ENCODE measurements at regions of chr2 and their contacts with region 1.

Region 1: DNA sequence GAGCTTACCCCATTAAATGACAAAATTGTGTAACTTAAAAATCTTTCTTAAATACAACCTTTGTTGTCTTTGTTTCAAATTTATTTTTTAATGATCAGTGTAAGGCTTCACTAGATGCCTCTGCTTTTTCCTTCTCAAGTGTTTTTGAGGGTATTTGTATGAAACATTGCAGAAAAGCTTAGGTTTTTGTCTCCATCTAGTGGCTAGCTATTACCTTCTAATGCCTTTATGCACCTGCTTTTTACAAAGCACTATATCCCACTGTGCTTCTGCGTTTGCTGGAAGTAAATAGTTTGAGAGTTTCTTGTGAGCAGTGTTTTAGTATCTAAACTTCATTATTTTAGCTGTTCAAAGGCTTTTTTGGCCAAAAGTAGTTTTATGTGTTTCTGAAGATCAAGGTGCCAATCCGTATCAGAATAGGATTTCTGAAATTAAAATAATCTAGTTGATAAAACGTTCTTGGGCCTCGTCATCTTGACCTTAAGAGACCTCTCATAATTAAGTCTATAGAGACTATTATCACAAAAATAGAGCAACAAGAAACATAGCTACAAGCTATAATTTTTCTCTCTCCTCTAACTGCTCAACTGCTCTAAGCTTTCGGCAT is 47.0 kb downstream of the IWS1 start:
- DNase-seq: no peak
- ATAC-seq: peak; percentile 58
- H3K4me3 Mint-ChIP-seq: no peak overlapping the region
- H3K27ac Mint-ChIP-seq: no peak overlapping the region
- H3K4me1 Mint-ChIP-seq: no peaks in the 10 kb centered on the region
- H3K27me3 Mint-ChIP-seq: no peaks in the 10 kb centered on the region

Region 2: GRCh38 chr2:127254386-127254981 is 224.8 kb before region 1 on chr2:
- CTCF ChIA-PET with region 1: no interaction called
- POLR2A ChIA-PET with region 1: no interaction called
- DNase-seq: no peak
- ATAC-seq: no peak
- H3K4me3 Mint-ChIP-seq: no peak overlapping the region
- H3K27ac Mint-ChIP-seq: no peak overlapping the region
- H3K4me1 Mint-ChIP-seq: peaks cover 14% of the 10 kb centered on the region
- H3K27me3 Mint-ChIP-seq: no peaks in the 10 kb centered on the region

Region 3: DNA sequence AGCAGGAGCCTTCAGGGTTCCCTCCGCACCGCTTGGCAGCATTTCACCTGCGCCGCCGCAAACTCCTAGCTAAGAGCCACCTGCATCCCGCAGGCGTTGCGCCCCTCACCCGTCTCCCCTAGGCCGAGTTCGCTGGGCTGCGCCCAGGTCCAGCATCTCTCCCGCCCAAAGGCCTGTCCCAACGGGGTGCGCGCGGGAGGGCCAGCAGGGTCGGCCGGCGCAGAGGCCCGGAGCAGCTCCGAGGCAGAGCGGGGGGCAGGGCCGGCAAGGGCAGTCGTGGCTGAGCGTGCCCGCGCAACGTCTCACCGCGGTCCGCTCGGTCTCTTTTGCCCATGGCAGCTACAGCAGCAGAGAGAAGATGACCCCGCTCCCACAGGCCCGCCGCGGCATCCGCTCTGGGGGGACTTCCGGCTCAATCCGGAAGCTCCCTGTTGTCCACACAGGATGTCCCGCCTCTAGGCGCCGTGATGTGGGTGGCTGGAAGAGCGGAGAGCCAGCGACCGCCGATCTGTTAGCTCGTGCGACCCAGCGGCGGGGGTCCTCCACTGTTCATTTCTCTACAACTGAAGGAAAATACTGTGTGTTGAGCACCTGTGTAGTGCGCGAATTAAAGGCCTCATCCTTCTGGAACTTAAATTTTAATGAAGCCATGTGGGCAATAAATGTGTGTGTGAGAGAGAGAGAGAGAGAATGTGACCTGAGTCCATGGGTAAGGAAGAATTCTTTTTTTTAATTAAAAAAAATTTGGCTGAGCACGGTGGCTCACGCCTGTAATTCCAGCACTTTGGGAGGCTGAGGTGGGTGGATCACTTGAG is 185.4 kb before region 1 on chr2 and contains the start of gene ERCC3:
- CTCF ChIA-PET with region 1: interaction called, 15 read pairs
- POLR2A ChIA-PET with region 1: no interaction called
- DNase-seq: peak; percentile 90
- ATAC-seq: peak; percentile 98
- H3K4me3 Mint-ChIP-seq: peak within 1 kb of the TSS; percentile 99
- H3K27ac Mint-ChIP-seq: peak within 1 kb of the TSS; percentile 98
- H3K4me1 Mint-ChIP-seq: peaks cover 28% of the 10 kb centered on the region
- H3K27me3 Mint-ChIP-seq: no peaks in the 10 kb centered on the region
- total RNA-seq, gene ERCC3: 59.4 to 61.7 TPM

Region 4: GRCh38 chr2:127398239-127398590 is 81.1 kb before region 1 on chr2:
- CTCF ChIA-PET with region 1: no interaction called
- POLR2A ChIA-PET with region 1: no interaction called
- DNase-seq: peak; percentile 58
- ATAC-seq: peak; percentile 93
- H3K4me3 Mint-ChIP-seq: no peak overlapping the region
- H3K27ac Mint-ChIP-seq: no peak overlapping the region
- H3K4me1 Mint-ChIP-seq: peaks cover 13% of the 10 kb centered on the region
- H3K27me3 Mint-ChIP-seq: no peaks in the 10 kb centered on the region

Region 5: GRCh38 chr2:127415593-127416505 is 63.5 kb before region 1 on chr2:
- CTCF ChIA-PET with region 1: interaction called, 10 read pairs
- POLR2A ChIA-PET with region 1: interaction called, 4 read pairs
- DNase-seq: peak; percentile 83
- ATAC-seq: peak; percentile 95
- H3K4me3 Mint-ChIP-seq: peak overlapping the region; percentile 75
- H3K27ac Mint-ChIP-seq: peak overlapping the region; percentile 74
- H3K4me1 Mint-ChIP-seq: peaks cover 30% of the 10 kb centered on the region
- H3K27me3 Mint-ChIP-seq: peaks cover 13% of the 10 kb centered on the region

Region 6: GRCh38 chr2:127490283-127490682 is 11.0 kb after region 1 on chr2:
- CTCF ChIA-PET with region 1: interaction called, 12 read pairs
- POLR2A ChIA-PET with region 1: interaction called, 3 read pairs
- DNase-seq: no peak
- ATAC-seq: no peak
- H3K4me3 Mint-ChIP-seq: no peak overlapping the region
- H3K27ac Mint-ChIP-seq: no peak overlapping the region
- H3K4me1 Mint-ChIP-seq: peaks cover 30% of the 10 kb centered on the region
- H3K27me3 Mint-ChIP-seq: no peaks in the 10 kb centered on the region

Measured in activated CD8-positive, alpha-beta T cell treated with anti-CD3 and anti-CD28 coated beads, Interleukin-2, amount 10 ng/mL, durations not matched to agents 7 days and 5 days (primary cell).